ENCODE measurements at regions of chr2 and their contacts with region 1.

Region 1: DNA sequence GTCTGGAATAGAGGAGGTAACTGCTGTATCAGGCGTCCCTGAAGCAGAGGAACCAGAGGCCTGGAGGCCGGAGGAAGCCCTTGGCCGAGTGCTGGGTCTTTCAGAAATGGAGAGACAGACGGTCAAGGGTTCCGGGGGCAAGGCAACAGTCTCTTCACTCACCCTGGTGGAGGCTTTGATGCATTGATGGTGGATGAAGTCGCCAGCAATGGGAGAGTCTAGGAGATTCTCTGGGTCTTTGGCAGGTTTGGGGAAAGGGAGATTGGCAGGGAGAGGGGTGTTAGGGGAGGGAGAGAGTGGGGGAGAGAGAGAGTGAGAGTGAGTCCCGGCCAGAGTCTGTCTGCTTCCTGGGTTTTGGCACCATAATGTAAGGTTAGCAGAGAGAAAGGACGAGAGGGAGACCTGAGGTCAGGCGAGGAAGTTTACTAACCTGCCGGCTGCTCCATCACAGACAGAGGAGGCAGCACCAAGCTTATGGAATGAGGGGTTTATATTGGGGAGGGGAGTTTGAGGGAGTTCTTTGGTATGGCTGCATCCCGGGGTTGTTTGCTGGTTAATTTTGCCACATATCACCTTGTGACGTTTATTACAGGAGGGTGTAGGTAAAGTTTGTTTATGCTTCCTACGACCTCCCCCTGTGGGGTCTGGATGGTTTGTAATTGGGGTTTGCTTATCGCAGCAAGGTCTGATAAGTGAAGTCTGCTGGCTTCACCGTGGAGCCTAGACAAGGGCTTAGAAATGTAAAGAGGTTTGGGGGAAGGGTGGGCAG is 19.6 kb downstream of the COMMD1 start:
- DNase-seq: no peak
- H3K4me3 ChIP-seq: no peak overlapping the region
- H3K27ac ChIP-seq: no peak overlapping the region
- H3K4me1 ChIP-seq: no peaks in the 10 kb centered on the region
- H3K27me3 ChIP-seq: no peaks in the 10 kb centered on the region
- CTCF ChIP-seq: no peak

Region 2: DNA sequence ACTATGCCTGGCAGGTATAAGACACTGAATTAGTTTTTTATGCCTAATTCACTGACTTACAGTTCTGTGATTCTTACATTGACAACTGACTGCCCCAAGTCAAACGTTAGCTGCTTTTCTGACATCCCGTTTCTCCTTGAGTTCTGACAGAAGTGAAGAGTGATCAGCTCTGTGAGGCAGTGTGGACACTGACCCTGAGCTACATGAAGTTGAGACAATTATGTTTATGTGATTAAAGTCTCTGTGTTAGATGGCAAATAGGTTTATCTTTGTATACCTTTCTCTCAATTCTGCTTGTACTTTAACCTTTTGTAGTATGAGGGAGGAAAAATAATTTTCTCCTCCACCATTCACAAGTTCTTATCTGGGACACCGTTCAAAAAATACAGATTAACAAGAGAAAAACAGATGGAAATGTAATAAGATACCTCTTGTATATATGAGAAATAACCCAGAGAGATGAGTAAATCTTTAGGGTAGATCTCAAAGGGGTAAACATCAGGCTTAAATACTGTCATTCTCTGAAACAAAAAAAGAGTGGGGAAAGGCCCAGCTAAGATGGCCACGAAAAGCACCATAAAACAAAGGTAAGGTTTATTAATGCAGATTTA is 185.4 kb after region 1 on chr2:
- CTCF ChIA-PET with region 1: no interaction called
- POLR2A ChIA-PET with region 1: no interaction called
- intact Hi-C with region 1: no loop called
- DNase-seq: no peak
- H3K4me3 ChIP-seq: no peak overlapping the region
- H3K27ac ChIP-seq: no peak overlapping the region
- H3K4me1 ChIP-seq: no peaks in the 10 kb centered on the region
- H3K27me3 ChIP-seq: no peaks in the 10 kb centered on the region
- CTCF ChIP-seq: no peak

Region 3: GRCh38 chr2:62478093-62478580 is 553.1 kb after region 1 on chr2:
- CTCF ChIA-PET with region 1: no interaction called
- POLR2A ChIA-PET with region 1: no interaction called
- intact Hi-C with region 1: no loop called
- DNase-seq: peak; percentile 18 to 40
- H3K4me3 ChIP-seq: no peak overlapping the region
- H3K27ac ChIP-seq: no peak overlapping the region
- H3K4me1 ChIP-seq: no peaks in the 10 kb centered on the region
- H3K27me3 ChIP-seq: no peaks in the 10 kb centered on the region
- CTCF ChIP-seq: no peak

Region 4: GRCh38 chr2:63544017-63544627 is 1619.0 kb after region 1 on chr2:
- CTCF ChIA-PET with region 1: no interaction called
- POLR2A ChIA-PET with region 1: no interaction called
- intact Hi-C with region 1: loop called (anchors 5 kb)
- DNase-seq: no peak
- H3K4me3 ChIP-seq: no peak overlapping the region
- H3K27ac ChIP-seq: no peak overlapping the region
- H3K4me1 ChIP-seq: no peaks in the 10 kb centered on the region
- H3K27me3 ChIP-seq: no peaks in the 10 kb centered on the region
- CTCF ChIP-seq: peak; percentile 78